A673 (cell line): ENCODE measurements at regions of chr20 and their contacts with region 1.

Region 1: GRCh38 chr20:52379723-52380336 is 188.3 kb upstream of the ZFP64 start:
- DNase-seq: peak; percentile 55
- H3K4me3 ChIP-seq: no peak overlapping the region
- H3K27ac ChIP-seq: no peak overlapping the region
- H3K4me1 ChIP-seq: no peaks in the 10 kb centered on the region
- H3K27me3 ChIP-seq: no peaks in the 10 kb centered on the region
- CTCF ChIP-seq: peak; percentile 98

Region 2: GRCh38 chr20:51144476-51144875 is 1235.4 kb before region 1 on chr20:
- CTCF ChIA-PET with region 1: no interaction called
- POLR2A ChIA-PET with region 1: no interaction called
- intact Hi-C with region 1: no loop called
- DNase-seq: no peak
- H3K4me3 ChIP-seq: no peak overlapping the region
- H3K27ac ChIP-seq: no peak overlapping the region
- H3K4me1 ChIP-seq: no peaks in the 10 kb centered on the region
- H3K27me3 ChIP-seq: no peaks in the 10 kb centered on the region
- CTCF ChIP-seq: no peak

Region 3: DNA sequence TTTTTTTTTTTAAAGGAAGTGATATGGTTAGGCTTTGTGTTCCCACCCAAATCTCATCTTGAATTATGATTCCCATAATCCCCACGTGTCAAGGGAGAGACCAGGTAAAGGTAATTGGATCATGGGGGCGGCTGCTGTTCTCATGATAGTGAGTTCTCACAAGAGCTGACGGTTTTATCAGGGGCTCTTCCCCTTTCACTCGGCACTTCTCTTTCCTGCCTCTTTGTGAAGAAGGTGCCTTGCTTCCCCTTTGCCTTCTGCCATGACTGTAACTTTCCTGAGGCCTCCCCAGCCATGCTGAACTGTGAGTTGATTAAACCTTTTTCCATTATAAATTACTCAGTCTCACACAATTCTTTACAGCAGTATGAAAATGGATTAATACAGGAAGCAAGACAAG is 252.5 kb before region 1 on chr20:
- CTCF ChIA-PET with region 1: no interaction called
- POLR2A ChIA-PET with region 1: no interaction called
- intact Hi-C with region 1: loop called (anchors 10 kb)
- DNase-seq: no peak
- H3K4me3 ChIP-seq: no peak overlapping the region
- H3K27ac ChIP-seq: no peak overlapping the region
- H3K4me1 ChIP-seq: no peaks in the 10 kb centered on the region
- H3K27me3 ChIP-seq: no peaks in the 10 kb centered on the region
- CTCF ChIP-seq: no peak

Region 4: GRCh38 chr20:52242237-52243230 is 137.3 kb before region 1 on chr20:
- CTCF ChIA-PET with region 1: no interaction called
- POLR2A ChIA-PET with region 1: no interaction called
- intact Hi-C with region 1: loop called (anchors 2 kb)
- DNase-seq: peak; percentile 68
- H3K4me3 ChIP-seq: no peak overlapping the region
- H3K27ac ChIP-seq: peak overlapping the region; percentile 4
- H3K4me1 ChIP-seq: peaks cover 19% of the 10 kb centered on the region
- H3K27me3 ChIP-seq: no peaks in the 10 kb centered on the region
- CTCF ChIP-seq: peak; percentile 63

Region 5: GRCh38 chr20:52425253-52425652 is 45.4 kb after region 1 on chr20:
- CTCF ChIA-PET with region 1: no interaction called
- POLR2A ChIA-PET with region 1: no interaction called
- intact Hi-C with region 1: no loop called
- DNase-seq: peak; percentile 14
- H3K4me3 ChIP-seq: no peak overlapping the region
- H3K27ac ChIP-seq: no peak overlapping the region
- H3K4me1 ChIP-seq: no peaks in the 10 kb centered on the region
- H3K27me3 ChIP-seq: no peaks in the 10 kb centered on the region
- CTCF ChIP-seq: no peak